Activated CD4-positive, alpha-beta memory T cell treated with anti-CD3 and anti-CD28 coated beads for 36 hours (primary cell): ENCODE measurements at regions of chr19 and their contacts with region 1.

Region 1: GRCh38 chr19:42032431-42032830 is 37.6 kb downstream of the GRIK5 start:
- DNase-seq: no peak
- H3K4me3 Mint-ChIP-seq: no peak overlapping the region
- H3K27ac Mint-ChIP-seq: no peak overlapping the region
- H3K4me1 Mint-ChIP-seq: peaks cover 2% of the 10 kb centered on the region
- H3K27me3 Mint-ChIP-seq: peaks cover 7% of the 10 kb centered on the region

Region 2: GRCh38 chr19:41998246-41999020 is 34.0 kb before region 1 on chr19:
- CTCF ChIA-PET with region 1: interaction called, 13 read pairs
- POLR2A ChIA-PET with region 1: no interaction called
- intact Hi-C with region 1: no loop called
- DNase-seq: peak; percentile 66
- H3K4me3 Mint-ChIP-seq: no peak overlapping the region
- H3K27ac Mint-ChIP-seq: no peak overlapping the region
- H3K4me1 Mint-ChIP-seq: peaks cover 18% of the 10 kb centered on the region
- H3K27me3 Mint-ChIP-seq: peaks cover 62% of the 10 kb centered on the region

Region 3: GRCh38 chr19:42042455-42043170 is 10.2 kb after region 1 on chr19:
- CTCF ChIA-PET with region 1: interaction called, 31 read pairs
- POLR2A ChIA-PET with region 1: no interaction called
- intact Hi-C with region 1: no loop called
- DNase-seq: no peak
- H3K4me3 Mint-ChIP-seq: no peak overlapping the region
- H3K27ac Mint-ChIP-seq: no peak overlapping the region
- H3K4me1 Mint-ChIP-seq: no peaks in the 10 kb centered on the region
- H3K27me3 Mint-ChIP-seq: no peaks in the 10 kb centered on the region

Region 4: GRCh38 chr19:42051166-42052118 is 19.0 kb after region 1 on chr19:
- CTCF ChIA-PET with region 1: interaction called, 31 read pairs
- POLR2A ChIA-PET with region 1: interaction called, 4 read pairs
- intact Hi-C with region 1: no loop called
- DNase-seq: peak; percentile 74
- H3K4me3 Mint-ChIP-seq: no peak overlapping the region
- H3K27ac Mint-ChIP-seq: peak overlapping the region; percentile 82
- H3K4me1 Mint-ChIP-seq: peaks cover 22% of the 10 kb centered on the region
- H3K27me3 Mint-ChIP-seq: no peaks in the 10 kb centered on the region